ENCODE measurements at regions of chr9 and their contacts with region 1.

Region 1: DNA sequence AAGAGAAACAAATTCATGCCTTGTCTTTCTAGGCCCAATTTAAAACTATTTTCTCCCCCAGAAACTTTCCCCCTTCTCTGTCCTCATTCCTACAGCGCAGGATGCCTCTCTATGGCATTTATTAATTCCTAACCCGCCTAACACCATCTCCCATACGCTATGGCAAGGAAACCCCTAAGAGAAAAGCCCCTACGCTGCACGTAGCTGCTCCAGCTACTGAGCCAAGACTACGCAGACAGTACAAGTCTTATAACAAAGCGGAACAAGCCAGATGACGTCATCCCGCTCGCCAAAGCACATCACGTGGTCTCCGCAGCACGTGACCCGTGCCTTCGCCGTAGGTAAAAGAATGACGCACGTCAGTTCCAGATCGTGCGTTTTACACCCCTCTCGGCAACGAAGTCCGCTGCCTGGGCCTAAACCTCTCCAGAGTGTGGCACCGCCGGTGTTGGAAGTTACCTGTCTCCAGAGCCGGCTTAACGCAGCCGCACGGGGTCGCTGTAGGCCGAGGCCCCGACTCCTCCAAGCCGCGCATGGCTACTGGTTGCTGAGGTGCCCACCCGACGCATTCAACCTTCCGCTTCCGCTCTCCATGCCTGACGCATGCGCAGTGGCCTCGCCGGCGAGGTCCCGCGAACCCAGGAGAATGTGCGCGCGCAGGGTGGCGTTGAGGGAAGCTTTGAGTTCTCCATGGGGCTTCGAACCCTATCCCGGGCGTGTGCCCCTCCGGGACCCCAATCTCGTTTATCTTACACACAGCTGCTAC is at the start of gene TRMO:
- DNase-seq: peak; percentile 98
- H3K4me3 Mint-ChIP-seq: peak within 1 kb of the TSS; percentile 86
- H3K27ac Mint-ChIP-seq: peak within 1 kb of the TSS; percentile 97
- H3K4me1 Mint-ChIP-seq: peaks cover 35% of the 10 kb centered on the region
- H3K27me3 Mint-ChIP-seq: peaks cover 5% of the 10 kb centered on the region
- total RNA-seq, gene TRMO: 10.7 to 10.8 TPM

Region 2: DNA sequence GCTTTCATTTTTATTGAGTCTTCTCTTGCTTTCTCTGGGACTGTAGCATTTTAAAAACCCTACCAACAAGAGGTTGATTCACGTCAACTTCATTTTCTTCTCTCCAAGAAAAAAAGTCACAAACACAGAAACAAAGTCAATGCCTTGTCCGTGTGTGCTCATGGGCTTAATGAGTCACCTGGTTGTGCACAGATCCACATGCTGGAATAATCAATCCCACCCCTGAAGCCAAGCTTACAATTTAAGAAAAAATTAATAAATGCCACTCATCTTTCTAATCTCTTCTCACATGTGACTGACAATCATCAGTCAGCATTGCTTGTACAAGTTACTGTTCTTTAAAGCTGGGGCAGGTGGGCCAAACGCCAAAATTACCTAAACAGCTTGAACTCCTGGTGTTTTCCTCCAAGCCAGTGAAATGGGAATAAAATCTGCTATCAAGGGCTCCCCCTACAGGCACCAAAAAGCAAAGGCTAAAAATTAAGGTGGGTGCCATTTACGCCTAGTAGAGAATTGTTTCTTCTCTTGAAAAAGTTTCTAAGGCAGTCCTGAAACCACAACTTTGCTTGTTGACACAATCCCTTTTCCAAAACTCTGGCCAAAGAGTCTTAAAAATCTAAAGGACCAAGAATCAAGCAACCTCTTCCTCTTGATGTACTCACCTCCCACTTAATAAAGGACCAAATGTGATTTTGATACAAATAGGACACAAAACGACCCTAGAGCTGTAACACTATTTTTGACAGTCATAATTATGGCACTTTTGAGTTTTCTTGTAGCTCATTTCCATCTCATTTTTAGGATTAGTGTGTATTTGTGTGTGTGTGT is 21.2 kb before region 1 on chr9:
- CTCF ChIA-PET with region 1: interaction called, 114 read pairs
- intact Hi-C with region 1: loop called (anchors 1 kb)
- DNase-seq: peak; percentile 52
- H3K4me3 Mint-ChIP-seq: no peak overlapping the region
- H3K27ac Mint-ChIP-seq: no peak overlapping the region
- H3K4me1 Mint-ChIP-seq: peaks cover 59% of the 10 kb centered on the region
- H3K27me3 Mint-ChIP-seq: no peaks in the 10 kb centered on the region

Region 3: DNA sequence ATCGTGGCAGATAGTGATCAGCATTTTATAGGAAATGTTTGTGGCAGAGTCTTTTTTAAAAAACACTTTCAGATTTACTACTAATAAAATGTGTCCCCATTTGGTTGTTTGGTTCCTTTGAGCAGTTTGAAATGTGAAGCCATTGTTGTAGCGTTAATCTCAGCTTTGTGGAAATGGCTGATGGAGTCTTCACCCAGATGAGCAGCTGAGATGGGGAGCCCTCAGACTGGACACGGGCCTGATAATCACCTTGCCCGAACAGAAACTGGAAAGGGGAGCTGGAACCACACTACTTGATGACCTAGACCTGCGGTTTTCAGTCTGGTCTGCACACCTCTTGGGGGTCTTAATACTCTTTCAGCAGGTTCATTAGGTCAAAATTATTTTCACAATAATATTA is 40.4 kb after region 1 on chr9:
- CTCF ChIA-PET with region 1: interaction called, 26 read pairs
- intact Hi-C with region 1: no loop called
- DNase-seq: no peak
- H3K4me3 Mint-ChIP-seq: no peak overlapping the region
- H3K27ac Mint-ChIP-seq: no peak overlapping the region
- H3K4me1 Mint-ChIP-seq: peaks cover 2% of the 10 kb centered on the region
- H3K27me3 Mint-ChIP-seq: no peaks in the 10 kb centered on the region

Region 4: GRCh38 chr9:98045234-98046179 is 123.4 kb after region 1 on chr9:
- CTCF ChIA-PET with region 1: interaction called, 22 read pairs
- intact Hi-C with region 1: loop called (anchors 1 kb)
- DNase-seq: peak; percentile 58
- H3K4me3 Mint-ChIP-seq: peak overlapping the region; percentile 84
- H3K27ac Mint-ChIP-seq: peak overlapping the region; percentile 90
- H3K4me1 Mint-ChIP-seq: peaks cover 42% of the 10 kb centered on the region
- H3K27me3 Mint-ChIP-seq: no peaks in the 10 kb centered on the region

Region 5: GRCh38 chr9:98118640-98119601 is 196.8 kb after region 1 on chr9 and contains the start of gene TRIM14:
- CTCF ChIA-PET with region 1: interaction called, 7 read pairs
- intact Hi-C with region 1: loop called (anchors 1 kb)
- DNase-seq: peak; percentile 60
- H3K4me3 Mint-ChIP-seq: peak within 1 kb of the TSS; percentile 81
- H3K27ac Mint-ChIP-seq: peak within 1 kb of the TSS; percentile 92
- H3K4me1 Mint-ChIP-seq: peaks cover 44% of the 10 kb centered on the region
- H3K27me3 Mint-ChIP-seq: no peaks in the 10 kb centered on the region
- total RNA-seq, gene TRIM14: 49.6 to 55.0 TPM

Region 6: DNA sequence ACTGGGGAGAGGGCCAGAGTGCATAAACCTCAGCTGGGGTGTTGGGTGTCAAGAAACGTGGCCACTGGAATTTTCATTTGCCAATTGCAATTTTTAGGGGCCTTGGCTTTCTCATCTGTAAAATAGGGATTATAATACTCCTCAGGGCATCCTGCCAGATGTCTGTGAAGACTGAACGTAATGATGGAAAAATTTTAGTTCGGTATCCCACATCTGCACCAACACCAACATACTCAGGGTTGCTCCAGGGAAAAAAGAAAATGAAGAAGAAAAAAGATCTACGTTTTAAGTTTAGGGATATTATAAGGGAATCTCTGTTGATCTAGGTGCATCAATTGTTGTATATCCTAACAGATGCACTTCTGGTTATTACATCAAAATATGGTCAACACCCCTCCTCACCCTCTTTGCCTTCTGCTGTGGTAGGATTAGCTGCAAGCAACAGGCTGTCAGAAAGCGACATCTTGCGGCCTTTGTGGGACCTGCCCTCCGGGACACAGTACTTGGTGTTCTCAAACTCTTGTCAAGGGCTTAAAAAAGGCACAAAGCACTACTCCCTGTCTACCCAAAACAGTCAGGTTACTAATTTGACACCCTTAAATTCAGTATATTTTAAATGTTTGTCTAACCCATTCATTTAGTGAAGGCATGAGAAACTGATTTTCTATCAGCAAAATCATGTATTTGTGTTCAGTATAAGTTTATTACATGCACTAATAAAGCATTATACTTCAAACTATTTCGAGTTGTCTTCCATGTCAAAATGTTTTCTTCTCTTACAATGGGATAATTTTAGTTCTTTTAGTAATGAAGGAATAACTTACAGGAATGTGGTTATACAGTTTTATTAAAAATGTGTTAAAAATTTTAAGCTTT is 341.6 kb after region 1 on chr9:
- CTCF ChIA-PET with region 1: interaction called, 3 read pairs
- intact Hi-C with region 1: loop called (anchors 1 kb)
- DNase-seq: peak; percentile 93
- H3K4me3 Mint-ChIP-seq: no peak overlapping the region
- H3K27ac Mint-ChIP-seq: no peak overlapping the region
- H3K4me1 Mint-ChIP-seq: no peaks in the 10 kb centered on the region
- H3K27me3 Mint-ChIP-seq: no peaks in the 10 kb centered on the region

Region 7: GRCh38 chr9:98607787-98608186 is 685.6 kb after region 1 on chr9:
- CTCF ChIA-PET with region 1: no interaction called
- intact Hi-C with region 1: no loop called
- DNase-seq: no peak
- H3K4me3 Mint-ChIP-seq: no peak overlapping the region
- H3K27ac Mint-ChIP-seq: no peak overlapping the region
- H3K4me1 Mint-ChIP-seq: no peaks in the 10 kb centered on the region
- H3K27me3 Mint-ChIP-seq: peaks cover 4% of the 10 kb centered on the region

Region 8: GRCh38 chr9:98916660-98917059 is 994.5 kb after region 1 on chr9:
- CTCF ChIA-PET with region 1: no interaction called
- intact Hi-C with region 1: no loop called
- DNase-seq: no peak
- H3K4me3 Mint-ChIP-seq: no peak overlapping the region
- H3K27ac Mint-ChIP-seq: no peak overlapping the region
- H3K4me1 Mint-ChIP-seq: no peaks in the 10 kb centered on the region
- H3K27me3 Mint-ChIP-seq: no peaks in the 10 kb centered on the region

Measured in activated naive CD4-positive, alpha-beta T cell treated with anti-CD3 and anti-CD28 coated beads for 36 hours (primary cell).